Heart right ventricle (tissue), 16 donors: ENCODE measurements at regions of chr1 and their contacts with region 1.

Region 1: GRCh38 chr1:226062558-226063223 is at the start of gene H3-3A:
- DNase-seq: peak; percentile 99
- ATAC-seq: peak; percentile 92 to 95 (median 94)
- H3K4me3 ChIP-seq: peak within 1 kb of the TSS; percentile 69 to 93 (median 87)
- H3K27ac ChIP-seq: peak within 1 kb of the TSS; percentile 91 to 100 (median 99)
- H3K4me1 ChIP-seq: peaks cover 6 to 51% (median 47%) of the 10 kb centered on the region in 9 donors
- H3K27me3 ChIP-seq: no peaks in the 10 kb centered on the region
- CTCF ChIP-seq: peak in 5 of 9 donors; percentile 2 to 35 (median 17)
- total RNA-seq, gene H3-3A: 259 to 374 (median 304) TPM

Region 2: GRCh38 chr1:225950905-225951497 is 111.7 kb before region 1 on chr1:
- intact Hi-C with region 1: no loop called
- DNase-seq: no peak
- ATAC-seq: no peak
- H3K4me3 ChIP-seq: no peak overlapping the region
- H3K27ac ChIP-seq: no peak overlapping the region
- H3K4me1 ChIP-seq: peaks cover 0 to 4% (median 0%) of the 10 kb centered on the region in 9 donors
- H3K27me3 ChIP-seq: peaks cover 0 to 19% (median 0%) of the 10 kb centered on the region in 7 donors
- CTCF ChIP-seq: no peak

Region 3: DNA sequence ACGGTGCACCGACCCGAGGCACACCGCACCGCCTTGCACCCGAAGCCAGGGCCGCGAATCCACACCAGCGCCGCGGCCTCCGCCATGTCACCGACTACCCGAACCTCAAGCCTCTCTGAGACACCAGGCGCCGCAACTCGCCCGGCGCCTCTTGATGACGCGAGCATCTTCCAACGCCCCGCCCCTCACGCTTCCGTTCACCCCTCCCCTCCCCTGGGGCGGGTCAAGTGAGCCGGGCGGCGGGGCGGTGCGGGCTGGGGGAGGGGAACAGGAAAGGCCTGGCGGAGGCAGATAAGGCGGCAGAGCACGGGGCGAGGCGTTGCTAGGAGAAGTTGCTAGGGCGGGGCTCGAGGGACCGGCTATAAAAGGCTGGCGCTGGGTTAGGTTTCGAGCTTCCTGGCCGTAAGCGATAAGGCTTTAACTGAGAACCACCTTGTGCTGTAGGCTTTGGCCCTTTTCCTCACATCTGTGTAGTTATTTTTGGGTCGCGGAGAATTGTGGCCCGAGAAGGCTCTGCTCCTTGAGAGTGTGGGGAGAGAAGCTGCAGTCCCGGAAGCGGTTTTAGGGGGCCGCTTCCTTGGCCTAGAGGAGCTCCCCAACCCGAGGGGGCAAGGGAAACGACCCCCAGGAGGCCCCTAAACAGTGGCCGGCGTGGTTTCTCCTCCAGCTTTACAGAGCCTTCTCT is 63.3 kb before region 1 on chr1 and contains the start of gene SDE2:
- intact Hi-C with region 1: loop called in 8 of 10 experiments (anchors 1 to 5 kb)
- DNase-seq: peak; percentile 100
- ATAC-seq: peak; percentile 95 to 99 (median 97)
- H3K4me3 ChIP-seq: peak within 1 kb of the TSS; percentile 62 to 94 (median 76)
- H3K27ac ChIP-seq: peak within 1 kb of the TSS; percentile 91 to 100 (median 96)
- H3K4me1 ChIP-seq: peaks cover 13 to 73% (median 61%) of the 10 kb centered on the region in 9 donors
- H3K27me3 ChIP-seq: no peaks in the 10 kb centered on the region
- CTCF ChIP-seq: peak in 2 of 9 donors; percentile 15 to 26
- total RNA-seq, gene SDE2: 10.3 to 20.3 (median 13.9) TPM

Region 4: DNA sequence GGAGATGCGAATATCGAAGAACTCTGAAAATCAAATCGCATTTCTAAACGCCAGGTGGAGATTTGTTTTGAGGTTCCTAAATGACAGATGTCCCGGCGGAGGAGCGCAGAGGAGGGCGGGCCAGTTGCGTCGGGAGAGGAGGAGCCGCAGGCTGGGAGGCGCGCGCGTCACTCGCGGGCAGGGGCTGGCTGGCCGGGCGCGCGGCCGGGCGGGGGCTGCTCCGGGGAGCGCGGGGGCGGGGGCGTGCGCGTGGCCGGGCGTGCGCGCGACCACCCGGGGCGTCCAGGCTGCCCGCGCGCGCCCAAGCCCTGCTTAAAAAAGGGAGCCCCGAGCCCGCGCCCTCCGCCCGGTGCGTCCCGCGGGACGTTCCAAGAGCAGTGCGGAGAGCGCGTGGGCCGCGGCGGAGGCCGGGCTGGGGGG is 47.1 kb after region 1 on chr1:
- intact Hi-C with region 1: loop called in 4 of 10 experiments (anchors 2 kb)
- DNase-seq: peak; percentile 90 to 92
- ATAC-seq: peak; percentile 83 to 93 (median 89)
- H3K4me3 ChIP-seq: peak overlapping the region; percentile 37 to 75 (median 68)
- H3K27ac ChIP-seq: peak overlapping the region; percentile 93 to 100 (median 99)
- H3K4me1 ChIP-seq: peaks cover 18 to 45% (median 34%) of the 10 kb centered on the region in 9 donors
- H3K27me3 ChIP-seq: no peaks in the 10 kb centered on the region
- CTCF ChIP-seq: peak in 3 of 9 donors; percentile 43 to 47 (median 47)

Region 5: GRCh38 chr1:226186124-226187018 is 123.7 kb after region 1 on chr1 and contains the start of gene ACBD3:
- intact Hi-C with region 1: loop called in 5 of 10 experiments (anchors 2 to 10 kb)
- DNase-seq: peak; percentile 85 to 92
- ATAC-seq: peak; percentile 97 to 98 (median 98)
- H3K4me3 ChIP-seq: peak within 1 kb of the TSS; percentile 70 to 99 (median 90)
- H3K27ac ChIP-seq: peak within 1 kb of the TSS; percentile 88 to 96 (median 94)
- H3K4me1 ChIP-seq: peaks cover 9 to 51% (median 47%) of the 10 kb centered on the region in 9 donors
- H3K27me3 ChIP-seq: no peaks in the 10 kb centered on the region
- CTCF ChIP-seq: peak in 2 of 9 donors; percentile 10 to 38
- total RNA-seq, gene ACBD3: 25.3 to 39.1 (median 34.3) TPM

Region 6: GRCh38 chr1:226195144-226195543 is 132.5 kb after region 1 on chr1:
- intact Hi-C with region 1: loop called in 1 of 10 experiments (anchors 5 kb)
- DNase-seq: no peak
- ATAC-seq: no peak
- H3K4me3 ChIP-seq: no peak overlapping the region
- H3K27ac ChIP-seq: no peak overlapping the region
- H3K4me1 ChIP-seq: peaks cover 0 to 4% (median 0%) of the 10 kb centered on the region in 9 donors
- H3K27me3 ChIP-seq: peaks cover 0 to 8% (median 0%) of the 10 kb centered on the region in 7 donors
- CTCF ChIP-seq: no peak